CD4-positive, alpha-beta T cell (primary cell): ENCODE measurements at regions of chr1 and their contacts with region 1.

Region 1: DNA sequence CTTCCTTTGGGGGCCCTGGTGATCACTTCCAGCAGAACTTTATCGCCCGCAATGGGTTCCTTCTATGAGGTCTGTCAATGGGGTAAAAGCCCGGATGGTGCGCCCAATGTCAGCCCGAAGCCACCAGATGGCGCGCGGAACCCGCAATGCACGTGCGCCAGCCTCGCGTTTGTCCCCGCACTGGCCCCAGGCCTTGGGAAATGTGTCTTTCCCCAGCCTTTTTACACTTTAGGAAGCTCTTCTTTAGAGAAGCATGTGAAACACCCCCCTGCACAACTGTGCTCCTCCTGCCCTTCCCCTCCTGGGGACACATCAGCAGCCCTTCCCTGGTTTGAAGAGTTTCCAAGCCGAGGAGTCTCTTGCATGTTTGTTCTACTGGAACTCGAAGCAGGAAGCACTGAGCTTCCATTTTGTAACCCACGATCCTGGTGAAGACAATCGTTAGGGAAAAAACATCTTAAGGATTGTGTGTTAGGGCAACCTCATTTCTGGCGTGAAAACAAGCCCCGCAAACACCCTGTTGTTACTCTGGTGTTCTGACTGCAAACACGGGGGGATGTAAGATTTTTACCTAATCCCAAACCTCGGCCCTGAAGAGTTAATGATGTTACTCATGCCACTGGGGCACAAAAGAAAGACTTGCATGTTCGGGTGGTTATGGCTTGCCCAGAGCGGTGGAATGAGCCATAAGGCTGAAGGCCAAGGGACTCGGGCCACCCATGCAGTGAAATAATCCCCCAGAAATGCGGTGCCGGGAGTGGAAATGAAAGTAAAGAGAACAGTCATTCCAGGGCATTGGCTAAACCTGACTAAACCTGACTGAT is 20.4 kb upstream of the TARBP1 start:
- DNase-seq: peak; percentile 67 to 89 (median 79)
- ATAC-seq: peak; percentile 99
- H3K4me3 ChIP-seq: no peak overlapping the region
- H3K4me3 Mint-ChIP-seq: no peak overlapping the region
- H3K27ac ChIP-seq: no peak overlapping the region
- H3K27ac Mint-ChIP-seq: no peak overlapping the region
- H3K4me1 ChIP-seq: peaks cover 10% of the 10 kb centered on the region
- H3K4me1 Mint-ChIP-seq: peaks cover 8% of the 10 kb centered on the region
- H3K27me3 ChIP-seq: no peaks in the 10 kb centered on the region
- H3K27me3 Mint-ChIP-seq: no peaks in the 10 kb centered on the region
- CTCF ChIP-seq: peak; percentile 88

Region 2: GRCh38 chr1:234398849-234399381 is 100.4 kb before region 1 on chr1:
- CTCF ChIA-PET with region 1: no interaction called
- POLR2A ChIA-PET with region 1: no interaction called
- intact Hi-C with region 1: no loop called
- DNase-seq: peak in 2 of 14 experiments; percentile 37 to 44
- ATAC-seq: peak; percentile 7
- H3K4me3 ChIP-seq: peak overlapping the region; percentile 29
- H3K4me3 Mint-ChIP-seq: peak overlapping the region; percentile 85
- H3K27ac ChIP-seq: peak overlapping the region in 1 of 2 donors; percentile 7
- H3K27ac Mint-ChIP-seq: peak overlapping the region; percentile 92
- H3K4me1 ChIP-seq: peaks cover 14% of the 10 kb centered on the region
- H3K4me1 Mint-ChIP-seq: peaks cover 66% of the 10 kb centered on the region
- H3K27me3 ChIP-seq: no peaks in the 10 kb centered on the region
- H3K27me3 Mint-ChIP-seq: no peaks in the 10 kb centered on the region
- CTCF ChIP-seq: no peak

Region 3: GRCh38 chr1:234691567-234691966 is 192.2 kb after region 1 on chr1:
- CTCF ChIA-PET with region 1: no interaction called
- POLR2A ChIA-PET with region 1: no interaction called
- intact Hi-C with region 1: loop called (anchors 1 to 5 kb)
- DNase-seq: peak in 3 of 14 experiments; percentile 19 to 53 (median 50)
- ATAC-seq: peak; percentile 76
- H3K4me3 ChIP-seq: no peak overlapping the region
- H3K4me3 Mint-ChIP-seq: no peak overlapping the region
- H3K27ac ChIP-seq: no peak overlapping the region
- H3K27ac Mint-ChIP-seq: no peak overlapping the region
- H3K4me1 ChIP-seq: no peaks in the 10 kb centered on the region
- H3K4me1 Mint-ChIP-seq: peaks cover 5% of the 10 kb centered on the region
- H3K27me3 ChIP-seq: no peaks in the 10 kb centered on the region
- H3K27me3 Mint-ChIP-seq: no peaks in the 10 kb centered on the region
- CTCF ChIP-seq: peak; percentile 35

Region 4: GRCh38 chr1:234875953-234876855 is 376.9 kb after region 1 on chr1:
- CTCF ChIA-PET with region 1: no interaction called
- POLR2A ChIA-PET with region 1: no interaction called
- intact Hi-C with region 1: loop called in 1 of 2 experiments (anchors 10 kb)
- DNase-seq: no peak
- ATAC-seq: no peak
- H3K4me3 ChIP-seq: no peak overlapping the region
- H3K4me3 Mint-ChIP-seq: no peak overlapping the region
- H3K27ac ChIP-seq: no peak overlapping the region
- H3K27ac Mint-ChIP-seq: no peak overlapping the region
- H3K4me1 ChIP-seq: peaks cover 6% of the 10 kb centered on the region
- H3K4me1 Mint-ChIP-seq: peaks cover 6% of the 10 kb centered on the region
- H3K27me3 ChIP-seq: no peaks in the 10 kb centered on the region
- H3K27me3 Mint-ChIP-seq: no peaks in the 10 kb centered on the region
- CTCF ChIP-seq: no peak